HEK293 (cell line): ENCODE measurements at regions of chr6 and their contacts with region 1.

Region 1: DNA sequence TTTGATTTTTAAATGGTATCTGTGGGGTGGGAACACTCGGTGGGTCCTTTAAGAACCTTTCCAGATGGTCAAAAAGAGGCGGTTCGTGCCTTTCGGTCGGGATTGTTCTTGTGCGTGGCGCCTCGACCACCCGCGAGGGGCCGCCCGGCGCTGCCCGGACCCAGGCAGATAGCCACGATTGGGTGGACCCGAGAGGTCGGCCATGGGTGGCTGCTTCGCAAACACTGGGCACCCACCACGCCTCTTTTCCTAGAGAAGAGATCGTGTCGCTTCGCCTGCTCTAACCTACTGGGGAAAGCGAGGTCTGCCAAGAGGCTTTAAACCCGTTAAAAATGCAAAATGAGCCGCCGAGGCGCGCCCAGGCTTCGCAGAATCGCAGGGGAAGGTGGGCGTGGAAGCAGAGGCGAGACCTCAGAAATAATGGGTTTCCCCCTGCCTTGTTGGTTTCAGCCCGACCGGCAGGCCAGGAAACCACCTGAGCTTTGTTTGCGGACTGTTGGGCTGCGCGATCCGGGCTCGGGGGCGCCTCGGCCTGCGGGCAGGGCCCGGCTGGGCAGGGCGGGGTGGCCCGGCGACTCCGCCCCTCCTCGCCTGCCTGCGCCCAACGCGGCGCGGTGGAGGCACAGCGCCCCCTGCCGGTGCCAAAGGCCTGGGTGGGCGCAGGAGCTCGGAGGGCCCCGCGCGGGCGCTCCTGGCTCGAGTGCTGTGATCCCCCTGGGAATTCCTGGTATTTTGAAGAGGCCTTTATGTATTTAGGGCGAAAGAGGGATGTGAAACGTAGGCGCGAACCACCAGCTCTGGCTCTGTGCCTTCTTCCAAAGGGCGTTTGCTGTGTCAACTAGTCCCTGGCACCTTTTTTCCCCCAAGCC is 1.6 kb downstream of the MARCKS start:
- H3K4me3 ChIP-seq: peak overlapping the region; percentile 76
- H3K27ac ChIP-seq: peak overlapping the region; percentile 99
- H3K4me1 ChIP-seq: no peaks in the 10 kb centered on the region
- CTCF ChIP-seq: peak; percentile 62

Region 2: DNA sequence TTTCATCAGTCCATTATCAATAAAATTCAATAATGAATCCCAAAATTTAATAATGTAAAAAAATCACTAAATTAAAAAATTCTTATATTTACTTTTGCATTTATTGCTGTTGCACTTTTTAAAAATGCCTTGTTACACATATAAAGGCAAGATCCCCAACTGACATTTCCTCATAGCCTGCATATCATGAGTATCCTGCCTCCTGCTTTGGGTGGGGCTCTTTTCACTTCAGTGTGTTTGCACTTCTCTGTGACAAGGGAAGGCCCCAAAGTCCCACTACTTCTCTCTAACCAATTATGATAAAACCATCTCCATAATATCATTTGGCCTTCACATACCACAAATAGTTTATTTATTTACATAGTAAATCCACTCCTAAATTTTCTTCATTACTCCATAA is 447.7 kb before region 1 on chr6:
- CTCF ChIA-PET with region 1: interaction called, 10 read pairs
- POLR2A ChIA-PET with region 1: interaction called, 3 read pairs
- H3K4me3 ChIP-seq: no peak overlapping the region
- H3K27ac ChIP-seq: no peak overlapping the region
- H3K4me1 ChIP-seq: no peaks in the 10 kb centered on the region
- CTCF ChIP-seq: no peak

Region 3: DNA sequence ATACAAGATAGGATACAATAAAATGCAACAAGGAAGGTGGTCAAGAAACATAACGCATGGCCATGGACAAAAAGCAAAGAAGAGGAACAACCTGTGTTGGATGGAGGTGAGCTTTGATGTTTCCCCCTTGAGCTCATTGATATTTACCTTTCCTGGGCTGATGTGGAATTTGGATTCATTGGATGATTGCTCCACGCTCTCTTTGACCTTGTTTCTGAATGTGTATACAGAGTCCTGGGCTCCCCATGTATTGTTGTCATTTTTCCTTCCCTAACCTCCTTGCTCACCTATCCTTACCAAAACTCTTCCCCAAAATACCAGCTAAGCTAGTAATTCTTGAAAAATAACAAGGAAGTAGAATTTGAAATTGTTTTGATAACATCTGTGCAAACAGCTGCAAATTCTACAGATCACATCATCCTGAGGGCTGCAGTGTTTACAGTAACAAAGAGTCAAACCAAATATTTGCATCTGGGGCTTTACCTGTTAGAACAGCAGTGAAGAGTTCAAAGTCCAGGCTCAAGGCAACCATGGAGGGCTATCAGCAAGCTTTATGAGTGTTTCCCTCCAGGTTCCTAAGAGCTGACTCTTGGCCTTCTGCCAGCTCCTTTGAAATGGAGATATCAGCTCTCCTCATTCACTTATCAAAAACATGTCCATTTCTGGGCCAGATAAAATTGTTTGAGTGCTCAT is 215.9 kb before region 1 on chr6:
- CTCF ChIA-PET with region 1: interaction called, 12 read pairs
- POLR2A ChIA-PET with region 1: interaction called, 4 read pairs
- H3K4me3 ChIP-seq: no peak overlapping the region
- H3K27ac ChIP-seq: no peak overlapping the region
- H3K4me1 ChIP-seq: peaks cover 5% of the 10 kb centered on the region
- CTCF ChIP-seq: no peak

Region 4: GRCh38 chr6:113662688-113663333 is 195.9 kb before region 1 on chr6:
- CTCF ChIA-PET with region 1: no interaction called
- POLR2A ChIA-PET with region 1: no interaction called
- H3K4me3 ChIP-seq: no peak overlapping the region
- H3K27ac ChIP-seq: no peak overlapping the region
- H3K4me1 ChIP-seq: no peaks in the 10 kb centered on the region
- CTCF ChIP-seq: no peak

Region 5: DNA sequence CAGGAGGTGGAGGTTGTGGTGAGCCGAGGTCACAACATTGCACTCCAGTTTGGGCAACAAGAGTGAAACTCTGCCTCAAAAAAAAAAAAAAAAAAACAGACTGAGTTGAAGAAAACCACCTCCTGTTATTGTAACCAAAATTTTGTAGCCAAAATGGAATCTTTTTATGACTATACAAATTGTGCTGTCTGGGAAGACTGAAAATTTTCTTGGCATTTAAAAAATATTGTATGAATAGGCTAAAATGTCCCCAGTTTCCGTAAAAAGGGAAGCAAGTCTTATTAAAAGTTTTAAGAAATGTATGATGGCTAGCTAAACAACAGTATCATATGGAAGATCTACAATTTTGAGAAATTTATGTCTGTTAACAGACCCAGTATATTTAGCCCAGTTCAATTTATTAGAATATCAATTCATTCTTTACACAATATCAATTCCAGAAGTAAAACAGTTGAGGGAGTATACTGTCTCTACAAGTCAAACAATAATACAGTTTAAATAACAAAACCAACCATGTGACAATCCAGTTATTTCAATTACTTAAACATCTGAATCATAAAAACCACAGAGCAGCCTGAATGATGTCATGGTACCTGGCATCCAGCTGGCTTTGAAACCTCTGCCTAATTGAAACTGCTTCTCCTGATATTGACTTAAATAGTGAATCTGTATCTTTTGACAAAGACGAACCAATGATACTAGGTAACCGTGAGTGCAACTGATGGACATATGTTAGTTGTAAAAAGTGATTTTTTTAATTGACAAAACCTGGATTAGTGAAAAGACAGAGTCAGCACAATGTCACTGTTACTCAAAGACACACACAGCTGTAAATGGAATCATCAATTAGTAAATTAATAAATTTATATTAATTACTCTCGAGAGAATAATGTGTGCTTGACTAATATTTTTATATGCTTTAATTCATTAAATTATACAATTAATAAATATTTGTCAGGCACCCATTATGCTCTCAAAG is 168.1 kb before region 1 on chr6:
- CTCF ChIA-PET with region 1: interaction called, 10 read pairs
- POLR2A ChIA-PET with region 1: interaction called, 7 read pairs
- H3K4me3 ChIP-seq: no peak overlapping the region
- H3K27ac ChIP-seq: no peak overlapping the region
- H3K4me1 ChIP-seq: no peaks in the 10 kb centered on the region; the same call in 1 of the 2 replicates
- CTCF ChIP-seq: no peak

Region 6: DNA sequence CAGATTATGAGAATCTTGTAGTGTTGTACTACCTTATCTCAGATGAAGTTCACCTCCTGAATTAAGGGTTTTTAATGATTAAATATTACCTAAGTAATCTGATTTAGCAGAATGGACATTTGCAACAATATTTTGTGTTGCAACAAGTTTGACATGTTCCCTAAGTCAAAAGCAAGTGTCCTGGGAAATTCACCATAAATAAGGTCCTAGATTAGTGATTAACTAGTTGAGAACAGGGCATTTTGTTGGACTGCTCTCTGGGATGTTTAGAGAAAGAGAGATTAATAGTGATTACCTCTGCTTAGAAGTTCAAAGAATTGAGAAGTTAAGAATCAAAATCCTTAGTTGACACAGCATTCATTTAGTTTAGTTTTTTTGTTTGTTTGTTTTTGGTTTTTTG is 121.7 kb before region 1 on chr6:
- CTCF ChIA-PET with region 1: no interaction called
- POLR2A ChIA-PET with region 1: no interaction called
- H3K4me3 ChIP-seq: no peak overlapping the region
- H3K27ac ChIP-seq: no peak overlapping the region
- H3K4me1 ChIP-seq: 0 out of 2 replicates have a peak, but pooled peaks cover 6% of the 10 kb centered on the region
- CTCF ChIP-seq: no peak

Region 7: DNA sequence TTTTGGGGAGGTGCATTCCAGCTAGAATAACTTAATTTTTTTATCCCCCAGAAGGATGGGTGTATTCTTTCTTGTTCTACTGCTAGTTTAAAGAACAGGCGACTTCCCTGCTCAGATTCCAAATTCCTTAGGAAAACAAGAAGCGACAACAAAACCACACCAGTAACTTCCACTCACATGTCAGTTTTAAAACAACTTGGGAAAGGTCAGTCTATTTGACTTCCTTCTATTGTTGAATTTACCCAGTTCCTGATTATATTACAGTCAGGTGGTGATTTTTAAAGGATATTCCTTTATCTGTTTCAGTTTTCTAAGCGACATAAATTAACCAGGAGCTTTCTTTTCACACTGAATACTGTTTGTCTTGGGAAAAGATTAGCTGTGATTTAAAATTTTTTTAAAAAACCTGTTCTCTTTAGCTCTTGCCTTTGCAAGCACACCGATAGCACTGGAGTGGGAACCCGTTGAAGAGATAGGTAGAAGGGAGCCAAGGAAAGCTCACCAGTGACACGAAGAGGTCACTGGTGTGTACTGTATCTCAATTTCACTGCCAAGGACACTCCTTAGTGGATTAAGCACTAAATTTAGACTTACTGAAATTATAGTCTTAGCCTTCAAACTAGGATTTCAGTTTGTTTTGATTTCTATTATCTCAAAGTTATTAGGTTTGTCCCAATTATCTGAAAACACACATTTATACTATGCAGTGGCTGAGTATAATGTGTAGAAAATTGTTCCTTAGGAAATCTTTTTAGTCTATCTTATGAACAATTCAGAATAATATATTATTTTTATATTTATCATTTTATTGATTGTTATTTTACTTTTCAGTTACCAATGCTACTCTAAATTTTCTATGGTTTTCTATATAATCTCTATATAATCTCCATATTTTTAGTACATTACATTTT is 20.7 kb after region 1 on chr6:
- CTCF ChIA-PET with region 1: interaction called, 29 read pairs
- POLR2A ChIA-PET with region 1: interaction called, 19 read pairs
- H3K4me3 ChIP-seq: no peak overlapping the region
- H3K27ac ChIP-seq: no peak overlapping the region
- H3K4me1 ChIP-seq: no peaks in the 10 kb centered on the region
- CTCF ChIP-seq: 0 out of 2 replicates have a peak, but pooled peaks have one; percentile 23

Region 8: DNA sequence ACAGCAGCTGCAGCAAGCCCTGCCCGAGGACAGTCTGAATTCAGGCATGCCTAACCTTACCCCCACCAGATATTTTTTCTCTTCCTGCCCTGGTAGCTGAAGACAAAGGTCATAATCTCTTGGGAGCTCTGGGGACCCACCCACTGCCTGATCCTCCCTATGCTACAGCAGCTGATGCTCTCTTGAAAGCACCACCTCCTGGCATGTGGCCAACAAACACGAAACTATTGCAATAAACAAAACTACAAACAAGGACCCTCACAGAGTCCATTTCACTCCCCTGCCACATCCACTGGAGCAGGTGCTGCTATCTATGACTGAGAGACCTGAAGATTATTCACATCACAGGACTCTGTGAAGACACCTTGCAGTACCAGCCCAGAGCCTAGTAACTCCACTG is 722.6 kb after region 1 on chr6:
- CTCF ChIA-PET with region 1: no interaction called
- POLR2A ChIA-PET with region 1: no interaction called
- H3K4me3 ChIP-seq: no peak overlapping the region
- H3K27ac ChIP-seq: no peak overlapping the region
- H3K4me1 ChIP-seq: no peaks in the 10 kb centered on the region
- CTCF ChIP-seq: no peak